ENCODE measurements at regions of chr22 and their contacts with region 1.

Region 1: DNA sequence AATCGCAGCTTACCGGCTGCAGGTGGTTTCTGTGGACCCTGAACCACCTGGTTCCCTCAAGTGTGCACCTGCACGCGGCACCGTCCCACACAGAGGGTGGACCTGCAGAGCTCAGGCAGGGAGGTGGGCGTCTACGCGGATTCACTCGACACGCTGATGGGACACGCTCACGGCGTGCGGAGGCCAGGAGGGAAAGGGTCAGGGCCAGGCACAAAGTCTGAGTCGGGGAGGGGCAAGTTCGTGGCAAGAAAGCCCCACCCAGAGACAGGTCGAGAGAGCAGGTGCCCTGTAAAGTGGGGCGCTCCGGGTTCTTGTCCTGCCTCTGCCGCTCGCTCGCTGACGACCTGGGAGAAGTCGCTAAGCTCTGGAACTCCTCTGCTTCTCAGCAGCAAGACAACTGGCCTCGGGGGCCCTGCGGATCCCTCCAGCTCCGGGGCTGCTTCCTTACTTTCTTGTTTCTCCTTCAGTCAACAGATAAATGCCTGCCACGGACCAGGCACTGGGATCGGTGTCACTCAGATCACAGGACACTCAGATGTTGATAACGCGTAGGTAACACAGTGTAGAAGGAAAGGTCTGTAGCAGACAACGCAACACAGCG is 72.4 kb upstream of the NUP50 start:
- DNase-seq: no peak
- H3K4me3 ChIP-seq: no peak overlapping the region
- CTCF ChIP-seq: no peak

Region 2: GRCh38 chr22:44972363-44973083 is 118.8 kb before region 1 on chr22:
- in situ Hi-C with region 1: loop called (anchors 5 kb)
- DNase-seq: no peak
- H3K4me3 ChIP-seq: no peak overlapping the region
- CTCF ChIP-seq: no peak

Region 3: GRCh38 chr22:45009881-45010531 is 81.3 kb before region 1 on chr22 and contains the start of gene PHF21B:
- in situ Hi-C with region 1: no loop called
- DNase-seq: peak; percentile 18
- H3K4me3 ChIP-seq: peak within 1 kb of the TSS; percentile 51
- CTCF ChIP-seq: no peak